ENCODE measurements at regions of chr11 and their contacts with region 1.

Region 1: DNA sequence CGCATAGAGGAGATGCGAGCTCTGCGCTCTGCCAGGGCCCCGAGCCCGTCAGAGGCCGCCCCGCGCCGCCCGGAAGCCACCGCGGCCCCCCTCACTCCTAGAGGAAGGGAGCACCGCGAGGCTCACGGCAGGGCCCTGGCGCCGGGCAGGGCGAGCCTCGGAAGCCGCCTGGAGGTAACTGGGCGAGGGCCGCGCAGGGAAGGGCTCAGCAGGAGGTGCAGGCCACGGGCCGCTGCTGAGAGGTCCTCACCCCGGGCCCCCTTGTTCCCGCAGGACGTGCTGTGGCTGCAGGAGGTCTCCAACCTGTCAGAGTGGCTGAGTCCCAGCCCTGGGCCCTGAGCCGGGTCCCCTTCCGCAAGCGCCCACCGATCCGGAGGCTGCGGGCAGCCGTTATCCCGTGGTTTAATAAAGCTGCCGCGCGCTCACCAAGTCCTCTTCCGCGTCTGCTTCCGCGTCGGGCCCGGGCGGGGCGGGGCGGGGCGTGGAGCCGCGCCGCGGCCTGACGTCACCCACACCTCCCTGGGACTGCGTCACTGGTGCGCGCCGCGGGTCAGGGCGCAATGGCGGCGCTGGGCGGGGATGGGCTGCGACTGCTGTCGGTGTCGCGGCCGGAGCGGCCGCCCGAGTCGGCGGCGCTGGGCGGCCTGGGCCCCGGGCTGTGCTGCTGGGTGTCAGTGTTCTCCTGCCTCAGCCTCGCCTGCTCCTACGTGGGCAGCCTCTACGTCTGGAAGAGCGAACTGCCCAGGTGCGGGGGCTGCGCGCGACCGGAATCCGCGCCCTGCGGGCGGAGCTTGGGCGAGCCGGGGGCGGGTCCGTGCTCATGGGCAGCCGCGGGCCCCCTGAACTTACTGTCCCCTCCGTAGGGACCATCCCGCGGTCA is at the start of gene RCE1:
- DNase-seq: peak; percentile 95
- total RNA-seq, gene RCE1: 5.7 TPM

Region 2: DNA sequence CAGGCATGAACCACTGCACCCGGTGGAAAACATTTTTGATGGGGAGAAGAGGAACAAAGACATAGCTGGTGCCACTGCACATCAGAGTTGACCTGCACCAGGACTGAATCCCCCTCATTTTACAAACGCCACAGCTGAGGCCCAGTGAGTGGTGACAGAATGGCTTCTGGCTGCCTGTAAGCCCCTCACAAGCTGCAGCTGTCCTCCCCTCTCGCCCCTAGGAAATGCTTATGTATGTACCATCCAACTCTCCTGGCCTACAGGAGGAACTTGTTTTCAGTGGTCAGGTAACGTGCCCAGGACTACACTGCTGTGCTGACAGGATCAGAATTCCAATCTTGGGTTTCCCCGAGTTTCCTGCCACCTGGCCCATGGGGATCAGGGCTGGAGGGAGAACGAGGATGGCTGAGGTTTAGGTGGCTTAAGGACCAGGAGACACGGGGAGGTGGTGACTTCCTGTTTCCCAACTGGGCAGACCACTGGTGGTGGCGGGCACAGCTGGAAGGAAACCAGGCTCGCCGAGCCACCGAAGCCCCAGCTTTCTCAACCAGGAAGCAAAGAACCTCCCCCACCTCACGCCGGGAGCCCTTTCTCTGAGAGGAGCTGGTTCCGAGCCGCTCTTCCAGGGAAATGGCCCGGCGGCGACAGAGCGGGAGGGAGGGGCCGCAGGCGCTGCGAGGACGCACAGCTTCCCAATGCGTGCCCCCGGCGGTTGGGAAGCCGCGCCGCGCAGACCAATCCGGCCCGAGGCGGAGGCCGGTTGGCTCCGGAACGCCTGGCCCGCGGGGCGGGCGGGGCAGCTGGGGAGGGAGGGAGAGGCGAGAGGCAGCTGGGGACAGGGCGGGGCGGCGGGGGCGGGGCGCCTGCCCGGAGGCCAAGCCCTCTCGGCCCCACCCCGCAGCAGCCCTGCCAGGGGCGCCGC is 12.7 kb after region 1 on chr11:
- intact Hi-C with region 1: loop called (anchors 1 kb)
- DNase-seq: peak; percentile 96

Measured in cardiac septum (tissue), 1 donor.